Mucosa of descending colon (tissue), 3 donors: ENCODE measurements at regions of chr1 and their contacts with region 1.

Region 1: GRCh38 chr1:22704440-22705067 is 6.1 kb upstream of the EPHB2 start:
- DNase-seq: peak; percentile 77 to 94 (median 79)
- ATAC-seq: peak; percentile 76
- H3K4me3 ChIP-seq: no peak overlapping the region
- H3K4me1 ChIP-seq: peaks cover 17% of the 10 kb centered on the region
- CTCF ChIP-seq: peak; percentile 76

Region 2: DNA sequence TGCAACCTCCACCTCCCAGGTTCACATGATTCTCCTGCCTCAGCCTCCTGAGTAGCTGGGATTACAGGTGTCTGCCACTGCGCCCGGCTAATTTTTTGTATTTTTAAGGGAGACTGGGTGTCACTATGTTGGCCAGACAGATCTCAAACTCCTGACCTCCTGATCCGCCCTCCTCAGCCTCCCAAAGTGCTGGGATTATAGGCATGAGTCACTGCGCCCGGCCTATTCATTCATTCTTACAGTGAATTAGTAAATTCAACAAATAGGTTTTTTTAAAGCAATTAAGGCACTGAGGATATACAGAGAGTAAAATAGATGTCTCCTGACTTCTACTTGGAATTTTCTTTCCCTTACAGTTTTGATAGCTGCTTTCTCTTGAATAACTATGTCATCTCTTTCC is 608.5 kb before region 1 on chr1:
- intact Hi-C with region 1: no loop called
- DNase-seq: no peak
- ATAC-seq: no peak
- H3K4me3 ChIP-seq: no peak overlapping the region
- H3K4me1 ChIP-seq: no peaks in the 10 kb centered on the region
- CTCF ChIP-seq: no peak

Region 3: DNA sequence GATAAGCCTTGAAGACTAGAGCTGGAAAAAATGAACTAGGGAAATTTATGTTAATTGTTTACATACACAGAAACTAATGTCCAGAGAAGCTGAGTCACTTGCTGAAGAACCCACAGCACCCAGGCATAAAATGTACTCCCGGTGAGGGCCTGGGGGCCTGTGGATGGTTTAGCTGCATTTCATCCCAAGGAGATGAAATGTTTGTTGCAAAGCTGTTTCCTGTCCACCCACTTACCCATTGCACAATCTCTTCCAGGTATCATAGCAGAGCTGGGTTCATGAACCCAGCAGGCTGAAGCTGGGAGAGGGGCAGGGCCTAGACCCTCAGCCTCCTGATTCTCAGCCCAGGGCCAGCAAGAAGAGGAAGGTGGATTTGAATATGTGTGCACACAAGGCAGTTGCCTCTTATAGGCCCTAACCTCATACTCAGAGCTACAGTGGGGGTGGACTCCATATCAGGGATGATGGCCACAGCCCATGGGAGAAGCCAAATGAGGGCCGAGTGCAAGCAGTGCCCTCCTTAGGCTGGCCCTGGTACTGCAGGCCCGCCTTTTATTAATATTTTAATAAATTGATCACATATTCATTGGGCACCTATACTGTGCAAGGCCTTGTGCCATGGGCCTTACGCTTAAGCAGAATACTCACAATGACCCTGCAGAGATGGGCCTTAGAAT is 157.3 kb after region 1 on chr1:
- intact Hi-C with region 1: loop called in 1 of 2 experiments (anchors 10 kb)
- DNase-seq: peak in 1 of 3 donors; percentile 39
- ATAC-seq: peak; percentile 75
- H3K4me3 ChIP-seq: no peak overlapping the region
- H3K4me1 ChIP-seq: no peaks in the 10 kb centered on the region
- CTCF ChIP-seq: peak; percentile 74